ENCODE measurements at regions of chr20 and their contacts with region 1.

Region 1: GRCh38 chr20:50663095-50663850 is 28.1 kb downstream of the RIPOR3 start:
- DNase-seq: peak in 1 of 2 donors; percentile 30
- ATAC-seq: peak in 7 of 8 donors; percentile 25 to 55 (median 35)
- H3K4me3 ChIP-seq: no peak overlapping the region
- H3K27ac ChIP-seq: peak overlapping the region in 9 of 10 donors; percentile 26 to 81 (median 71)
- H3K4me1 ChIP-seq: peaks cover 0 to 58% (median 44%) of the 10 kb centered on the region in 9 donors
- H3K27me3 ChIP-seq: no peaks in the 10 kb centered on the region
- CTCF ChIP-seq: peak in 5 of 9 donors; percentile 17 to 45 (median 41)

Region 2: GRCh38 chr20:50077818-50078604 is 585.3 kb before region 1 on chr20:
- intact Hi-C with region 1: no loop called
- DNase-seq: no peak
- ATAC-seq: peak in 2 of 8 donors; percentile 3 to 15
- H3K4me3 ChIP-seq: no peak overlapping the region
- H3K27ac ChIP-seq: peak overlapping the region in 2 of 10 donors; percentile 21 to 51
- H3K4me1 ChIP-seq: peaks cover 0 to 45% (median 7%) of the 10 kb centered on the region in 9 donors
- H3K27me3 ChIP-seq: no peaks in the 10 kb centered on the region
- CTCF ChIP-seq: no peak

Region 3: GRCh38 chr20:50713657-50714101 is 50.4 kb after region 1 on chr20:
- intact Hi-C with region 1: loop called in 3 of 10 experiments (anchors 10 kb)
- DNase-seq: no peak
- ATAC-seq: peak in 7 of 8 donors; percentile 36 to 73 (median 61)
- H3K4me3 ChIP-seq: no peak overlapping the region
- H3K27ac ChIP-seq: no peak overlapping the region
- H3K4me1 ChIP-seq: peaks cover 0 to 11% (median 0%) of the 10 kb centered on the region in 9 donors
- H3K27me3 ChIP-seq: no peaks in the 10 kb centered on the region
- CTCF ChIP-seq: peak; percentile 7 to 66 (median 48)

Region 4: GRCh38 chr20:50724851-50725721 is 61.8 kb after region 1 on chr20:
- intact Hi-C with region 1: loop called in 3 of 10 experiments (anchors 5 kb)
- DNase-seq: peak; percentile 59 to 68
- ATAC-seq: peak; percentile 80 to 94 (median 85)
- H3K4me3 ChIP-seq: no peak overlapping the region
- H3K27ac ChIP-seq: peak overlapping the region; percentile 61 to 82 (median 73)
- H3K4me1 ChIP-seq: peaks cover 8 to 35% (median 19%) of the 10 kb centered on the region in 9 donors
- H3K27me3 ChIP-seq: no peaks in the 10 kb centered on the region
- CTCF ChIP-seq: no peak

Region 5: GRCh38 chr20:50731055-50731871 is 68.0 kb after region 1 on chr20 and contains the start of gene PARD6B:
- intact Hi-C with region 1: loop called in 2 of 10 experiments (anchors 5 kb)
- DNase-seq: peak; percentile 94 to 95
- ATAC-seq: peak; percentile 97 to 99 (median 98)
- H3K4me3 ChIP-seq: peak within 1 kb of the TSS; percentile 50 to 93 (median 84)
- H3K27ac ChIP-seq: peak within 1 kb of the TSS; percentile 59 to 89 (median 82)
- H3K4me1 ChIP-seq: peaks cover 0 to 35% (median 21%) of the 10 kb centered on the region in 9 donors
- H3K27me3 ChIP-seq: peaks cover 0 to 17% (median 3%) of the 10 kb centered on the region in 7 donors
- CTCF ChIP-seq: peak in 1 of 9 donors; percentile 9
- total RNA-seq, gene PARD6B: 1.7 to 7.1 (median 3.7) TPM